ENCODE measurements at regions of chr1 and their contacts with region 1.

Region 1: GRCh38 chr1:94541175-94542087 is at the start of gene F3:
- DNase-seq: peak; percentile 95
- H3K4me3 ChIP-seq: peak within 1 kb of the TSS; percentile 83 to 89 (median 87)
- H3K27ac ChIP-seq: peak within 1 kb of the TSS; percentile 89
- H3K4me1 ChIP-seq: peaks cover 31% of the 10 kb centered on the region
- H3K27me3 ChIP-seq: no peaks in the 10 kb centered on the region
- CTCF ChIP-seq: no peak
- total RNA-seq, gene F3: 994 to 1,649 TPM

Region 2: DNA sequence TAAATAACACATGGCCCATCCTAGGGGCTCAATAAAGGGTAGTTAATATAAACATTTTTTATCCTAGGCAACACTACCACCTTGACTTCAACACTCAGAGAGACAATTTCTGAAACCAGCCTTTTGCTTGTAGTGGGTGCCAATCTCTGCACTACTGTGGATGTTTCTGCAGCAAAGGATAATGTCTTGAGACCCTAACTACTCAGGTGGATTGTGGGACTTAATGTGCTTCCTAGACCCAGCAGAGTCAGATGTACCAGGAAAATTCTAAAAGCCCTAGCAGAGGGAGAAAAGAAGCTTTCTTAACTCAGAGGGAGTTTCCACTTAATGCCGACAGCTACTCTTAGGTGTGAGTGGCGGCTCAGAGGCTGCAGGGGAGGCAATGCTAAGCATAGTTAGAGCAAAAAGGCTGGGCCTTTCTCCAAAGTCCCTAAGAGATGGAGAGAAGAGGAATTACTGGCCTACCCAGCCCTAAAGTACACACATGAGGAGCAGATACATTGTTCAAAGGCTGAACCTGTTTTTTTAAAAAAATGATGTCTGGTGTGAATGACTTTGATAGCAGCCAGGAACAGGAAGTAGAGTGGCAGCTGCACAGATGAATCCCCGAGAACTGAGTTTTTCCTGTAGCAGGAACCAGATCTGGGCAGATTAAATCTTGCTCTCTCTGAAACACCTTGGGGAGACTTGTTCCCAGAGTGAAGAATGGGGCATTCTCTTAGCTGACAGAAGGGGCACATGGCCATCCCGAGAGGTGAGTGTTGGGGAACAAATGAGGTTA is 156.8 kb before region 1 on chr1:
- CTCF ChIA-PET with region 1: no interaction called
- dilution Hi-C with region 1: no loop called
- in situ Hi-C with region 1: no loop called
- intact Hi-C with region 1: no loop called
- DNase-seq: no peak
- H3K4me3 ChIP-seq: no peak overlapping the region
- H3K27ac ChIP-seq: no peak overlapping the region
- H3K4me1 ChIP-seq: no peaks in the 10 kb centered on the region
- H3K27me3 ChIP-seq: peaks cover 2% of the 10 kb centered on the region
- CTCF ChIP-seq: no peak

Region 3: GRCh38 chr1:94579876-94580294 is 38.5 kb after region 1 on chr1:
- CTCF ChIA-PET with region 1: no interaction called
- dilution Hi-C with region 1: loop called (anchors 5 kb)
- in situ Hi-C with region 1: no loop called
- intact Hi-C with region 1: loop called (anchors 2 kb)
- DNase-seq: peak; percentile 93
- H3K4me3 ChIP-seq: no peak overlapping the region
- H3K27ac ChIP-seq: peak overlapping the region; percentile 60
- H3K4me1 ChIP-seq: peaks cover 35% of the 10 kb centered on the region
- H3K27me3 ChIP-seq: no peaks in the 10 kb centered on the region
- CTCF ChIP-seq: no peak

Region 4: DNA sequence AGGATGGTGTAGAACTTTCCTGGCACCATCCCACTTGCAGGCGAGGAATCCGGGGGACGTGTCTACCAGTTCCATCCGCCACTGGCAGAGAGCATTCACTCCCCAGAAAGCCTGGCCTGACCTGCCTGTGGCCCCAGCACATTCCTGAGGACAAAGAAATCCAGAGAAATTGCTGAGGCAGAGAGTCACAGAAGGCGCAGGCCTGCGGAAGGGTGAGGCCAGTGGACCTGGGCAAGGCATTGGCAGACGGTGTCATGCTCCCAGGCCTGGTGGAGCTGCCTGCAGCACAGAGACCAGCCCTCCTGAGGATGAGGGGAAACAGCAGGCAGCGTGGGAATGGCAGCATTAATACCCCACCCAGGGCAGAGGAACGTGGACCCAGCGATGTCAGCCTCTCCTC is 81.3 kb after region 1 on chr1:
- CTCF ChIA-PET with region 1: no interaction called
- dilution Hi-C with region 1: no loop called
- in situ Hi-C with region 1: no loop called
- intact Hi-C with region 1: loop called (anchors 1 kb)
- DNase-seq: peak; percentile 91
- H3K4me3 ChIP-seq: no peak overlapping the region
- H3K27ac ChIP-seq: peak overlapping the region; percentile 87
- H3K4me1 ChIP-seq: peaks cover 55% of the 10 kb centered on the region
- H3K27me3 ChIP-seq: no peaks in the 10 kb centered on the region
- CTCF ChIP-seq: no peak

Region 5: DNA sequence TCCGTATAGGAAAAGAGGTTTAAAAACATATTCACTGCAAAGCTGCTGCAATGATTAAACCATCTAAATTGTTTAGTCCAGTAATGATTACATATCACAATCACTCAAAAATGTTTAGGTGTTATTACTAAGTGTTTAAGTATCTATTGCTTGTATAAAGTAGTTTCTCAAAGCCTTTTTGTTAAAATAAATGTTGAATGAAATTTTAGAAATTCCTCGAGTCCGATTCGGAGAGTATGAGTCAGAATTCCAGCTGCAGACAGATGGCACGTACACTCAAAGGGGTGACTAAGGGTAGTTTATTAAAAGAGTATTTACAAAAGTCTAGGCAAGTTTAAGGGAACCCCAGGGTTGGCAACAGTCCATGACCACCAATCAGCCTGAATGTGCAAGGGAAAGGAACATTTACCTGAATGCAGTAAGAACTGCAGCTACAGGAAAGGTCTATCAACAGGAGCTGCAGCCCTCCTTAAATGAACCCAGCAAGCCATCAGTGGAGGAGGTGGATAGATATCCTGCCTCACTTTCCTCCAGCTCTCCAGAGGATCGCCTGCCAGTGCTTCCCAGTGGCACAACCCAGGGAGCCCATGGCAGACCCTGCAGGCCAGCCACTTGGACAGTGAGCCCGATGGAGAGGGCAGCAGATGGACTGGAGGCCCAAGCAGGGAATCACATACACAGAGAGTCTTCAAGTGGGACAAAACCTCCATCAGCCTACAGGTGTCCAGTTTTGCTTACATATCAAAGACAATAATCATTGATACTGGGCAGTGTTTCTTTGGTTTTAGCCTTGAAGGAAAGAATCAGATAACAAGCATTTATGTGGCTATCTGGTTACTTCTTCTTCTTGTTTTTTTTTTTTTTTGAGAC is 186.7 kb after region 1 on chr1:
- CTCF ChIA-PET with region 1: no interaction called
- dilution Hi-C with region 1: no loop called
- in situ Hi-C with region 1: no loop called
- intact Hi-C with region 1: loop called (anchors 5 kb)
- DNase-seq: peak; percentile 98
- H3K4me3 ChIP-seq: no peak overlapping the region
- H3K27ac ChIP-seq: peak overlapping the region; percentile 71
- H3K4me1 ChIP-seq: peaks cover 67% of the 10 kb centered on the region
- H3K27me3 ChIP-seq: no peaks in the 10 kb centered on the region
- CTCF ChIP-seq: no peak

Region 6: DNA sequence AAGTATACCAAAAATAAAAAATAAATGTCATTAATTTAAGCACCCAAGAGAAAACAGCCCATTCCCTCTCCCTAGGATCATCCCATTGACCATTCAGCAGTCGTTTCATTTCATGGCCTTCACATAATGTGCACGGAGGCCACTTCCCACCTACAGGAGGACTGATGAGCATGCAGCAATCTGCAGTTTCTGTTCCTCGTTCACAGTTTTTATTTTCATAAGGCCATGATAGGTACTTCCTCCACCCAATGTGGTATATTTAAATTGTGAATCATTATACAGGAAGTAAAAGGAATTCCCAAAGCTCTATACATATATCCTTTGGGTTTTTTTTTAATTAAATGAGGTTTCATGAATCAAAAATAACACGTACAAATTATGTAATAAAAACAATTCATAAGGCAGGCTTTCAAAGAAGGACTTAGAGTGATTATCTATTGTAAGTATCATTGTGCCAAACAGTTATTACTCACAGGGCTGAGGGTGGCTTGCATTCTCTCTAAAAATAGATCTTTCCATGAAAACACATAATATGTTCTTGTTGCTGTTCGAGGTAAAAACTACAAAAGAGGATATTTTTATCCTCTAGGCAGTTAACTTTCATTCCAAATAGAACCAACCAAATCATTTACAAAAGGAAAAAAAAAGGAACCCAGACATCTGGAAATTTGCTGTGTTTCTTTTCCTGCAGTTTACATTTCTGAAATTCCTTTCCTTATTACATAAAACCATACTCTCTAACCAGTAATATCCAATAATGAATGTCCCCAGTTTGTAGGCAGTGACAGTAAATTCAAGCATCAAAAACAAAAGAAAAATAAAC is 251.3 kb after region 1 on chr1:
- CTCF ChIA-PET with region 1: no interaction called
- dilution Hi-C with region 1: loop called (anchors 5 kb)
- in situ Hi-C with region 1: no loop called
- intact Hi-C with region 1: no loop called
- DNase-seq: peak; percentile 96
- H3K4me3 ChIP-seq: peak overlapping the region in 1 of 3 experiments; percentile 16
- H3K27ac ChIP-seq: peak overlapping the region; percentile 81
- H3K4me1 ChIP-seq: peaks cover 35% of the 10 kb centered on the region
- H3K27me3 ChIP-seq: no peaks in the 10 kb centered on the region
- CTCF ChIP-seq: peak; percentile 41 to 56